ENCODE measurements at regions of chr10 and their contacts with region 1.

Region 1: GRCh38 chr10:36779234-36779846 is 346.1 kb upstream of the ANKRD30A start:
- DNase-seq: peak; percentile 87
- H3K4me3 ChIP-seq: no peak overlapping the region
- H3K27ac ChIP-seq: no peak overlapping the region
- H3K4me1 ChIP-seq: peaks cover 23% of the 10 kb centered on the region
- H3K27me3 ChIP-seq: no peaks in the 10 kb centered on the region
- CTCF ChIP-seq: peak; percentile 84

Region 2: GRCh38 chr10:35236739-35237138 is 1542.6 kb before region 1 on chr10:
- CTCF ChIA-PET with region 1: no interaction called
- POLR2A ChIA-PET with region 1: no interaction called
- intact Hi-C with region 1: loop called (anchors 10 kb)
- DNase-seq: peak; percentile 66
- H3K4me3 ChIP-seq: no peak overlapping the region
- H3K27ac ChIP-seq: peak overlapping the region; percentile 40
- H3K4me1 ChIP-seq: peaks cover 16% of the 10 kb centered on the region
- H3K27me3 ChIP-seq: no peaks in the 10 kb centered on the region
- CTCF ChIP-seq: peak; percentile 65

Region 3: GRCh38 chr10:35635576-35635975 is 1143.8 kb before region 1 on chr10:
- CTCF ChIA-PET with region 1: interaction called, 22 read pairs
- POLR2A ChIA-PET with region 1: interaction called, 4 read pairs
- intact Hi-C with region 1: loop called (anchors 1 kb)
- DNase-seq: peak; percentile 89
- H3K4me3 ChIP-seq: peak overlapping the region; percentile 11
- H3K27ac ChIP-seq: no peak overlapping the region
- H3K4me1 ChIP-seq: peaks cover 43% of the 10 kb centered on the region
- H3K27me3 ChIP-seq: no peaks in the 10 kb centered on the region
- CTCF ChIP-seq: peak; percentile 93

Region 4: GRCh38 chr10:35781643-35782035 is 997.7 kb before region 1 on chr10:
- CTCF ChIA-PET with region 1: interaction called, 8 read pairs
- POLR2A ChIA-PET with region 1: no interaction called
- intact Hi-C with region 1: loop called (anchors 5 kb)
- DNase-seq: peak; percentile 55
- H3K4me3 ChIP-seq: no peak overlapping the region
- H3K27ac ChIP-seq: no peak overlapping the region
- H3K4me1 ChIP-seq: peaks cover 12% of the 10 kb centered on the region
- H3K27me3 ChIP-seq: no peaks in the 10 kb centered on the region
- CTCF ChIP-seq: peak; percentile 60

Region 5: DNA sequence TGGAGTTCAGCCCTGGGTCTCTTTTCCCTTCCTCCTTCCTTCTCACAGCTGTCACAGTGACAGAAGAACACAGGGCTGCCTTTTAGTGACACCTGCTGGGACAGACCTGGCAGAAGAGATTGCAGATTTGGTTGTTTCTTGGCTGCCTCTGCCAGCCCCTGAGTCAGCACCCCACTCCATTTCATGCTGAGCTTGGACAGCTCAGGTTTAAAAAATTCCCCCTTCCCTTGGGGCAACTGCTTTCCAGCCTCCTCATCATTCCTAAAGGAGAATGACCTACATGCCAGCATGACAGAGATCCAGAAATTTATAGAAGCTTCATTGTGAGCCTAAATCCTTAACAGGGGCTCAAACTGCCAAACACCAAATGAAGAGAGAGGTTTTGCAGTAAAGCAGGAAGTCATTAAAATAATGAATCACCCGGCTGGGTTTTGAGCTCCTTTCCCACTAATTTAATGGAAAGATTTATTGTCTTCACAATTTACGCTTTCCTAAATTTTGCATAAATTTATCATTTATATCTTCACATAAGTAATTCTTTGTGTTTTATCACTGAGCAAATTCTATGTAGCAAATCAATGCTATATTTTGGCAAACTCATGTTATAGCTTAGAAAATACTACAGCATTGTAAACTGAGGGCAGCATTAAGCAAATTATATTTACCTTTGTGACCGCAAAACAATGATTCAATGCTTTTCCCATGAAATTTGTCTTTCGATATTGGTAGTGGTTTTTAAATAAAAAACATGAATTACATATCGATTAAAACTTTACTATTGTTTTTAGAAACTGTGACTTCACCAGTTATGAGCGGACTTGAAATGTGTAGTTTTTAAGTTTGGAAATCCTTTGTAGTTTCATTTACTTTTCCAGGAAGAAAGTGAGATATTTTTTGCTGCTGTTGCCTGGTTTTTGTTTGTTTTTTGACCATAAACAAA is 53.5 kb before region 1 on chr10:
- CTCF ChIA-PET with region 1: interaction called, 8 read pairs
- POLR2A ChIA-PET with region 1: no interaction called
- intact Hi-C with region 1: loop called (anchors 5 kb)
- DNase-seq: peak; percentile 98
- H3K4me3 ChIP-seq: no peak overlapping the region
- H3K27ac ChIP-seq: peak overlapping the region; percentile 54
- H3K4me1 ChIP-seq: peaks cover 51% of the 10 kb centered on the region
- H3K27me3 ChIP-seq: no peaks in the 10 kb centered on the region
- CTCF ChIP-seq: peak; percentile 76

Measured in A673 (cell line).